ENCODE measurements at regions of chr3 and their contacts with region 1.

Region 1: GRCh38 chr3:73432023-73432705 is 192.6 kb downstream of the PDZRN3 start:
- DNase-seq: peak in 3 of 42 donors; percentile 8 to 56 (median 10)

Region 2: GRCh38 chr3:73100741-73101559 is 331.2 kb before region 1 on chr3:
- intact Hi-C with region 1: loop called (anchors 5 kb)
- DNase-seq: peak; percentile 39 to 96 (median 90)